OCI-LY7 (cell line): ENCODE measurements at regions of chr20 and their contacts with region 1.

Region 1: GRCh38 chr20:17504898-17505635 is 26.1 kb downstream of the BFSP1 start:
- DNase-seq: peak; percentile 79
- H3K4me3 ChIP-seq: peak overlapping the region; percentile 60
- H3K27ac ChIP-seq: no peak overlapping the region
- H3K4me1 ChIP-seq: peaks cover 13% of the 10 kb centered on the region
- CTCF ChIP-seq: peak; percentile 90

Region 2: GRCh38 chr20:17395729-17396128 is 109.3 kb before region 1 on chr20:
- CTCF ChIA-PET with region 1: no interaction called
- POLR2A ChIA-PET with region 1: no interaction called
- intact Hi-C with region 1: no loop called
- DNase-seq: no peak
- H3K4me3 ChIP-seq: no peak overlapping the region
- H3K27ac ChIP-seq: no peak overlapping the region
- H3K4me1 ChIP-seq: no peaks in the 10 kb centered on the region
- CTCF ChIP-seq: no peak

Region 3: GRCh38 chr20:17617551-17618223 is 112.6 kb after region 1 on chr20:
- CTCF ChIA-PET with region 1: no interaction called
- POLR2A ChIA-PET with region 1: no interaction called
- intact Hi-C with region 1: loop called (anchors 2 kb)
- DNase-seq: peak; percentile 48
- H3K4me3 ChIP-seq: no peak overlapping the region
- H3K27ac ChIP-seq: no peak overlapping the region
- H3K4me1 ChIP-seq: no peaks in the 10 kb centered on the region
- CTCF ChIP-seq: peak; percentile 75

Region 4: DNA sequence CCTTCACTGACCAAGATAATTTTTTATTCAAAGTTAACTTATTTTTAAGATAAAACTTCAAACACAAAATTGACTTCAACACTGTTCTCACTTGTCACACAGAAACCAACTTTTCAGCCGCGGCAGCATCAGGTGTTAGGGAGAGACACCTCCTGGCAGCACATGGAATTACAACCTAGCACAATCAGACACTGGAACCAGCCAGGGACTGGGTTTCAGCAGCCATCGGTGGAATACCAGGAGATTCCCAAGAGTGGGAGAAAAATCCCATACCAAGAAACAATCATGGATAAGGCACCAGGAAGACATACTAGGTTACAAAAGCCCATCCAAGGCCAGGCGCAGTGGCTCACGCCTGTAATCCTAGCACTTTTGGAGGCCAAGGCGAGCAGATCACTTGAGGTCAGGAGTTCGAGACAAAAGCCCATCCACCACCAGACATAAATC is 393.5 kb after region 1 on chr20:
- CTCF ChIA-PET with region 1: no interaction called
- POLR2A ChIA-PET with region 1: no interaction called
- intact Hi-C with region 1: loop called (anchors 2 kb)
- DNase-seq: peak; percentile 80
- H3K4me3 ChIP-seq: no peak overlapping the region
- H3K27ac ChIP-seq: no peak overlapping the region
- H3K4me1 ChIP-seq: peaks cover 26% of the 10 kb centered on the region
- CTCF ChIP-seq: peak; percentile 98

Region 5: GRCh38 chr20:17995967-17996819 is 491.1 kb after region 1 on chr20:
- CTCF ChIA-PET with region 1: no interaction called
- POLR2A ChIA-PET with region 1: no interaction called
- intact Hi-C with region 1: loop called (anchors 1 kb)
- DNase-seq: peak; percentile 76
- H3K4me3 ChIP-seq: no peak overlapping the region
- H3K27ac ChIP-seq: no peak overlapping the region
- H3K4me1 ChIP-seq: peaks cover 14% of the 10 kb centered on the region
- CTCF ChIP-seq: peak; percentile 99

Region 6: DNA sequence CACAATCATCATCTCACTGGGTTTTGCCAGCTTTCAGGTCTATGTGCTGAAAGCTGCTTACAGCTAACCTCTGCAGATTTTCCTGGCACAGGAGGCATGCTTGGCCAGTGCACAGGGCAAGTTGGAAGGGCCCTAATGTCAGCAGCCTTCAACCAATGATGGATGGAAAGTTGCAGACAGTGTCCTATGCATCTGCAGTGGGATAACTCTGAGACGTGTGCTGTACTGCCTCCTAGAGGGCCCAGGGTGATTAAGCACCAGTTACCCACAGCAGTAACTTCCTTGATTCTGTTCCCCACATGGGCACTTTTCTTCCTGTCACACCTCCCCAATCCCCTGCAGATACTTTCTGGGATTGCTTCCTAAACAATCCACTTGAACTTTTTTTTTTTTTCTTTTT is 514.0 kb after region 1 on chr20:
- CTCF ChIA-PET with region 1: no interaction called
- POLR2A ChIA-PET with region 1: no interaction called
- intact Hi-C with region 1: loop called (anchors 1 kb)
- DNase-seq: peak; percentile 50
- H3K4me3 ChIP-seq: no peak overlapping the region
- H3K27ac ChIP-seq: no peak overlapping the region
- H3K4me1 ChIP-seq: no peaks in the 10 kb centered on the region
- CTCF ChIP-seq: peak; percentile 75

Region 7: DNA sequence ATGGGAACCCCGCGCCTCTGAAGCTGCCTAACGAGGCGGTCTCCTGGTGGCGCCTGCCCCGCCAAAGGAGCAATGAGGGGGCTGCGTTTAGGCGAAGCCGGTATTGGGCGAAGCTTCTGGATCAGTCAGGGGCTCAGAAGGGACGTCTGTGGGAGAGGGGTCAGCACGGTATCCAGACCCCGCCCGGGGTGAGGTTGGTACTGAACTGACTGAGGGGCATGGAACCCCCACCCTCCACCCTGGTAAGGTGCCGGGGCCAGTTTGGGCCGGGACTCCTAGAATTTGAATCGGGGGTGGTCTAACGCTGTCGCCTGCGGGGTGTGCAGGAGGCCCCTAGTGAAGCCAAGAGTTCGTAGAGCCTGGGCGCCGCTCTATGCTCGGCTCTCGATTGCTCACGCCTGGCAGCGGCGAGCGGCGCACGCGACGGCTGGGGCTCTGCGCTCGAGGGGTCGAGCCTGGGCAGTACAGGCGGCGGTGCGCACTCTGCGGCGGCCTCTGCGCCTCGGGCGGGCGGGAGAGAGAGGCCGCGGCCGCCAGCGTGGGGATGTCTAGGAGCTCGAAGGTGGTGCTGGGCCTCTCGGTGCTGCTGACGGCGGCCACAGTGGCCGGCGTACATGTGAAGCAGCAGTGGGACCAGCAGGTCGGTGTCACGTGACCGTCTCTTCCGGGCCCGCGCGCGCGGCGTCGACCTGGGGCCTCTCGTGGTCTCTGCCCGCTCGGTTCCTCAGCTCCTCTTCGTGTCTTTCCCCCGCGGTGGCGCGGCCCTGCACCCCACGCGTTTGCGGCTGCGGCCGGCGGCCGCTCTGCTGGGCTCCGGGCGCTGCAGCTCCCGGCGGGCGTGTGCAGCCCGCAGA is 632.6 kb after region 1 on chr20 and contains the starts of genes KAT14 and PET117:
- CTCF ChIA-PET with region 1: no interaction called
- POLR2A ChIA-PET with region 1: no interaction called
- intact Hi-C with region 1: loop called (anchors 10 kb)
- DNase-seq: peak; percentile 95
- H3K4me3 ChIP-seq: peak within 1 kb of the TSS; percentile 99
- H3K27ac ChIP-seq: peak within 1 kb of the TSS; percentile 57
- H3K4me1 ChIP-seq: peaks cover 19% of the 10 kb centered on the region
- CTCF ChIP-seq: no peak
- total RNA-seq, gene KAT14: 13.1 and 14.9 TPM in 2 replicates
- total RNA-seq, gene PET117: 13.1 and 15.7 TPM in 2 replicates

Region 8: GRCh38 chr20:18276821-18277220 is 771.8 kb after region 1 on chr20:
- CTCF ChIA-PET with region 1: no interaction called
- POLR2A ChIA-PET with region 1: no interaction called
- intact Hi-C with region 1: loop called (anchors 2 kb)
- DNase-seq: peak; percentile 64
- H3K4me3 ChIP-seq: no peak overlapping the region
- H3K27ac ChIP-seq: no peak overlapping the region
- H3K4me1 ChIP-seq: no peaks in the 10 kb centered on the region
- CTCF ChIP-seq: peak; percentile 93